ENCODE measurements at regions of chr10 and their contacts with region 1.

Region 1: DNA sequence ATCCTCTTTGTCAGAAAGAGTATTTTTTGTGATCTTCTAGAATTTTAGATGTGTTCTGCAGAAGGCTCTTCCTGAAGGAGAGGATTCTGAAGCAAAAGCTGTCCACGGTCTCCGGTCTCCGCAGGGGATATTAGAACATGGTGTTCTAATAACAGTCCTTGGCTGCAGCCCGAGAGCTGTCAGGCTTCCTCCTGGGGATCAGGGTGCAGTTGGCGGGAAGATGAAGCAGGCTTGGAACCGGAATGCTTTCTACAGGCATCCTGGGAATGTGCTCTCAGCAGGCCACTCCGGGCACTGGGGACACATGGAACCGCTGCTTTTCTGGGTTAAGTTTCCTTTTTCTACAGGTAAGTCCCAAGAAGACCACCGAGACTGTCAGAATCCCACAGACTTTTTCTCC is 118.6 kb upstream of the PARD3 start:
- DNase-seq: no peak
- H3K4me3 ChIP-seq: no peak overlapping the region
- H3K27ac ChIP-seq: no peak overlapping the region
- H3K4me1 ChIP-seq: no peaks in the 10 kb centered on the region
- H3K27me3 ChIP-seq: no peaks in the 10 kb centered on the region
- CTCF ChIP-seq: no peak

Region 2: GRCh38 chr10:34824870-34825269 is 108.8 kb before region 1 on chr10:
- CTCF ChIA-PET with region 1: interaction called, 10 read pairs
- POLR2A ChIA-PET with region 1: no interaction called
- intact Hi-C with region 1: no loop called
- DNase-seq: no peak
- H3K4me3 ChIP-seq: no peak overlapping the region
- H3K27ac ChIP-seq: no peak overlapping the region
- H3K4me1 ChIP-seq: 0 out of 2 replicates have a peak, but pooled peaks cover 4% of the 10 kb centered on the region
- H3K27me3 ChIP-seq: no peaks in the 10 kb centered on the region
- CTCF ChIP-seq: no peak

Region 3: GRCh38 chr10:34838366-34838900 is 95.2 kb before region 1 on chr10:
- CTCF ChIA-PET with region 1: interaction called, 13 read pairs
- POLR2A ChIA-PET with region 1: no interaction called
- intact Hi-C with region 1: no loop called
- DNase-seq: no peak
- H3K4me3 ChIP-seq: no peak overlapping the region
- H3K27ac ChIP-seq: no peak overlapping the region
- H3K4me1 ChIP-seq: no peaks in the 10 kb centered on the region
- H3K27me3 ChIP-seq: no peaks in the 10 kb centered on the region
- CTCF ChIP-seq: no peak

Measured in PC-9 (cell line).